ENCODE measurements at regions of chr7 and their contacts with region 1.

Region 1: DNA sequence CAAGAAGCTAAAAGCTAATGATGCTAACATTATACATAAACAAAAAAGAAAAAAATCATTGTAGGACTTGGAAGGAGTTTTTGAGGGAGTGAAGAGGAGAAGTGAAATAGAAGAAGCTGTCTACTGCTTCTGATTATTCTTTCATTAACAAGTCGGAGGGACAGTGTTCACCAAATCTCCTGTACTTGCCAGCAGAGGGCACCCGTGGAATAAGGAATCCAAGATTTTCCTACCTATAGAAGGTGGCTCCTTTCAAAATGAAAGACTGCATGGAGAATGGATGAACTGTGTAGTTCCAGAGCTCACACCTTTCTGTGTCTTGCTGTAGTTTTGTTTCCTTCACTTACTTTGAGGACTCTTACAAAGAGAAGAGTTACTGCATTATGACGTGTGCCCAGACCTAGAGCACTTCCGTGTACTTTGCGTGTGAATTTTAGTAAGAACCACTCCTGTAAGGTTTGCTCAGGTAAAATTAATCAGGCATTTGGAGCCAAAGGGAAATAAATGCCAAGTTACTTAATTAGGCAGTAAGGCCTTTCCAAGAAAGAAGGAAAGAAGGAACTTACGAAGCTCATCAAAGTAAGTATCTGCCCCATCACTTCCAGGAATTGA is 145.1 kb downstream of the SEMA3D start:
- DNase-seq: peak; percentile 38
- H3K4me3 ChIP-seq: no peak overlapping the region; a peak in 1 of 4 replicates
- H3K27ac ChIP-seq: no peak overlapping the region
- H3K4me1 ChIP-seq: no peaks in the 10 kb centered on the region; a peak in 1 of 4 replicates
- H3K27me3 ChIP-seq: no peaks in the 10 kb centered on the region
- CTCF ChIP-seq: peak; percentile 99
- EP300 ChIP-seq: no peak
- RAD21 ChIP-seq: peak; percentile 99

Region 2: DNA sequence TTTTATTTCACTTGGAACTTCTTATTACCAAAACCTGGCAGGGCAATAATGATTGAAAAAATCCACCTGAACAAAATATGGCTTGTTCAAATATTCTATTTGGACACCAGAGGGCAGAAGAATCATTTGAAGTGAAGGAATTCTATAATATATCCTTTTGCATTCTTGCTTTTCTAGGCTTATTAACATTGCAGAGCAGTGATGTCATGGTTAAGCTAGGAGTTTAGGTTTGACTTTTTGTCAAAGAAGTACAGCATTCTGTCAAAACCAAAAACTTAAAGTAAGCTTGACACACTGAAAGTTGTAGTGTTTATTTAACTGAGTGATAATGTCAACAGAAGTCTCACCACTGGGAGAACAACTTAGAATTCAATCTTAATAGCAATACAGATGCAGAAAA is 10.8 kb before region 1 on chr7:
- CTCF ChIA-PET with region 1: interaction called, 53 read pairs
- POLR2A ChIA-PET with region 1: no interaction called
- DNase-seq: peak; percentile 1
- H3K4me3 ChIP-seq: no peak overlapping the region
- H3K27ac ChIP-seq: no peak overlapping the region
- H3K4me1 ChIP-seq: peaks cover 0 to 5% of the 10 kb centered on the region in 2 experiments; a peak in 2 of 4 replicates
- H3K27me3 ChIP-seq: no peaks in the 10 kb centered on the region
- CTCF ChIP-seq: peak; percentile 95
- EP300 ChIP-seq: no peak
- RAD21 ChIP-seq: peak; percentile 78

Region 3: GRCh38 chr7:85065306-85065705 is 23.6 kb after region 1 on chr7:
- CTCF ChIA-PET with region 1: interaction called, 25 read pairs
- POLR2A ChIA-PET with region 1: no interaction called
- DNase-seq: no peak
- H3K4me3 ChIP-seq: no peak overlapping the region
- H3K27ac ChIP-seq: no peak overlapping the region
- H3K4me1 ChIP-seq: peaks cover 0 to 19% of the 10 kb centered on the region in 2 experiments; a peak in 2 of 4 replicates
- H3K27me3 ChIP-seq: no peaks in the 10 kb centered on the region
- CTCF ChIP-seq: no peak
- EP300 ChIP-seq: no peak
- RAD21 ChIP-seq: no peak

Region 4: GRCh38 chr7:85104432-85105205 is 62.9 kb after region 1 on chr7:
- CTCF ChIA-PET with region 1: interaction called, 10 read pairs
- POLR2A ChIA-PET with region 1: no interaction called
- DNase-seq: no peak
- H3K4me3 ChIP-seq: peak overlapping the region; percentile 1 to 9; a peak in 1 of 4 replicates
- H3K27ac ChIP-seq: peak overlapping the region; percentile 24 to 50; a peak in 3 of 4 replicates
- H3K4me1 ChIP-seq: peaks cover 6 to 31% of the 10 kb centered on the region in 2 experiments
- H3K27me3 ChIP-seq: no peaks in the 10 kb centered on the region
- CTCF ChIP-seq: no peak
- EP300 ChIP-seq: peak in 1 of 2 experiments; percentile 27; a peak in 2 of 4 replicates
- RAD21 ChIP-seq: no peak

Region 5: DNA sequence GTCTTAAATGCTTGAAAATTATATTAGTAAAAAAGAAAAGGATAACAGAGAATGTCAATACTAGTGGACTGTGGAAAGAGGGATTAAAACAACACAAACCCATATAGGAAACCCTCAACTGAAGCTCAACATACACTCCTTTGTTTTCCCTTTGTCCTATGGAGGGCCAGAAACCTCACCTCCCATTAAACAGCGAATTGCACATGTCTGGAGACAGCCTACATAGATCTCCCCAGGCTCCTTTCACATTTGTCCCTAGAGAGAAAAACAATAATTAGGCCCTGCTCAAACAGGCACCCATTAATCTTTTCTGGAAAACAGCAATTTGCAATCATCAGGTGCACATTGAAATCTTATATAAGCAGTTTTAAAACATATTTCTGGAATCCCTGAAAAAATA is 232.7 kb after region 1 on chr7:
- CTCF ChIA-PET with region 1: no interaction called
- POLR2A ChIA-PET with region 1: no interaction called
- DNase-seq: no peak
- H3K4me3 ChIP-seq: no peak overlapping the region
- H3K27ac ChIP-seq: no peak overlapping the region
- H3K4me1 ChIP-seq: no peaks in the 10 kb centered on the region; a peak in 1 of 4 replicates
- H3K27me3 ChIP-seq: no peaks in the 10 kb centered on the region
- CTCF ChIP-seq: no peak
- EP300 ChIP-seq: no peak
- RAD21 ChIP-seq: no peak

Region 6: DNA sequence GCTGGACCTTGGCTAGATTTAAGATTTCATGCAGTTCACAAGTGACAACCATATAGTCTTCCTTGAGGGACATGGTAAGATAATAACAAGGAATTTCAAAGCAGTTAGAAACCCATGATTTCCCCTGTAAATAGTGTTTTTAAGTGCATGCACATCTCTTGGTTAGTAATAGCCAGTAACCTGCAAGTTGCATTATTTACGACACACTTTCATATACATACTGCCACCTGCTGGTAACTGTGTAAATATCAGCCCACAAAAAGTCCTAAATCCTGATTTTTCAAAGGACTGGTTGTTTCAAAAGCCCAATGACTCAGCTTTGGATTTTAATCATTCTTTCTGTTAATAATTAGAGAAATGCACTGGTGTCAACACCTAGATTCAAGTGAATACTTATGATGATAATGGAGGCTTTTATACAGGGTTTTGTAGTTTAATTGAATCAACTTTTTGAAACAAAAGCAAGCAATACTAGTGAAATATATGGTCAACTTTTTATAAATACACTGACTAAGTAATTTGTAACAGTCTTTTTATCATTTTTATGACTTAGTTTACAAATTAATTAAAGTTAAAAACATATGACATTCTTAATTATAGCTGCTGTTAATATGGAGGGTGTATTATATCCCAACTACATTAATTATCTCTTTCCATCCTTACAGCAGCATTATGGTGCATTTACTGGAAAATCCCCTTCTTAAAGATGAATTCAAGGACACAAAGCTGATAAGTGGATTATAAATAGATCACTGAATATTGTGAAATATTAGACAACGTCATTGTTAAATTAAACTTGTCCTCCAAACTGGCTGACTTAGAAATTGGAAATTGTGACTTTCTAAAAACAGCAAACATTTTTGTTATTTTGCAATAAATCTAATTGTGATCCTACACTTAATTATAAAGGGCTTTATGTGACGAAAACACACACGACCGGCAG is 512.8 kb after region 1 on chr7:
- CTCF ChIA-PET with region 1: interaction called, 156 read pairs
- POLR2A ChIA-PET with region 1: no interaction called
- DNase-seq: peak; percentile 19
- H3K4me3 ChIP-seq: no peak overlapping the region
- H3K27ac ChIP-seq: no peak overlapping the region
- H3K4me1 ChIP-seq: no peaks in the 10 kb centered on the region; a peak in 1 of 4 replicates
- H3K27me3 ChIP-seq: no peaks in the 10 kb centered on the region
- CTCF ChIP-seq: peak; percentile 95
- EP300 ChIP-seq: peak in 1 of 2 experiments; percentile 32; a peak in 1 of 4 replicates
- RAD21 ChIP-seq: peak; percentile 93

Region 7: GRCh38 chr7:85829817-85830432 is 788.2 kb after region 1 on chr7:
- CTCF ChIA-PET with region 1: interaction called, 68 read pairs
- POLR2A ChIA-PET with region 1: no interaction called
- DNase-seq: peak; percentile 19
- H3K4me3 ChIP-seq: no peak overlapping the region
- H3K27ac ChIP-seq: no peak overlapping the region
- H3K4me1 ChIP-seq: peaks cover 0 to 2% of the 10 kb centered on the region in 2 experiments; a peak in 1 of 4 replicates
- H3K27me3 ChIP-seq: no peaks in the 10 kb centered on the region
- CTCF ChIP-seq: peak; percentile 88
- EP300 ChIP-seq: no peak
- RAD21 ChIP-seq: peak; percentile 88

Region 8: GRCh38 chr7:85851571-85852193 is 810.0 kb after region 1 on chr7:
- CTCF ChIA-PET with region 1: interaction called, 29 read pairs
- POLR2A ChIA-PET with region 1: no interaction called
- DNase-seq: peak; percentile 31
- H3K4me3 ChIP-seq: no peak overlapping the region; a peak in 1 of 4 replicates
- H3K27ac ChIP-seq: no peak overlapping the region
- H3K4me1 ChIP-seq: no peaks in the 10 kb centered on the region
- H3K27me3 ChIP-seq: no peaks in the 10 kb centered on the region
- CTCF ChIP-seq: peak; percentile 85
- EP300 ChIP-seq: no peak
- RAD21 ChIP-seq: peak; percentile 82

Measured in SK-N-SH (cell line).